IMR-90 (cell line): ENCODE measurements at regions of chr11 and their contacts with region 1.

Region 1: DNA sequence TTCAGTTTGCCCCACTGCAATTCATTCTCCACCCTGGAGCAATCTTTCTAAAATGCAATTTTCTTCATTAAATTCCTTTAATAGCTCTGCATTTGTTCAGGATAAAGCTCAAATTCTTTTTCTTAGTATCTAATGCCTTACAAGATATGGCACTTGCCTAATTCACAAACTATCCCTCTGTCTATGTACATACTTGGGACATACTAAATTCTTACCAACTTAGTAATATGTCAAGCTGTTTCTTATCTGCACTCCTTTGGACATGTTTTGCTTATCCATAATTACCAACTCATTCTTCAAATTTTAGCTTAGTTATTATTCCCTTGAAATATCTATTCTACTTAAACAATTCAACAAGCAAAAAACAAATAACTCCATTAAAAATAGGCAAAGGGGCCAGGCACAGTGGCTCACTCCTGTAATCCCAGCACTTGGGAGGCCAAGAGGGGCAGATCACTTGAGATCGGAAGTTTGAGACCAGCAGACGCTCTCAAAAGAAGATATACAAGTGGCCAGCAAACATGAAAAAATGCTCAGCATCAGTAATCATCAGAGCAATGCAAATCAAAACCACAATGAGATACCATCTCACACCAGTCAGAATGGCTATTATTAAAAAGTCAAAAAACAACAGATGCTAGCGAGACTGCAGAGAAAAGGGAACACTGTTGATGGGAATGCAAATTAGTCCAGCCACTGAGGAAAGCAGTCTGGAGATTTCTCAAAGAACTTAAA is 96.9 kb downstream of the FAM76B start:
- DNase-seq: peak; percentile 55
- ATAC-seq: peak; percentile 95
- H3K4me3 ChIP-seq: no peak overlapping the region
- H3K27ac ChIP-seq: peak overlapping the region; percentile 57; the same call in 1 of the 2 replicates
- H3K4me1 ChIP-seq: peaks cover 2% of the 10 kb centered on the region; the same call in 1 of the 2 replicates
- H3K27me3 ChIP-seq: peaks cover 1% of the 10 kb centered on the region; the same call in 1 of the 2 replicates
- CTCF ChIP-seq: no peak
- POLR2A ChIP-seq: no peak
- RAD21 ChIP-seq: no peak

Region 2: DNA sequence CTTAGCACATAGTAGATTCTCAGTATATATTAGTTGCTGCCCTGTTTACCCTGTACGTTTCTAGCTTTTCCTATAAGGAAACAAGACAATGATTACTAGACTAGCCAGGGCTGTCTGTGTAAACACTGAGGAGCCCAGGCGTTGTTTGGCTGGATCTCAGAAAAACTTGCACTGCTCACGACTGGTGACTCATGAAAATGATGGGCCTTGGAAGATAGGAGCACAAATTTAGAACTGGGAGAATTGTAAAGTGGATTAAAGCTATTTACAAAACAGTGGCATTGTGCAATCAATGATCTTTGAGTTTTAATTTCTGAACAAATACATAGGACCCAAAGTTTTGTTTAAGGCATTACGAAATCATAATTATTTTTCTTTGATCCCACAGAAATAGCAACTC is 180.0 kb before region 1 on chr11:
- CTCF ChIA-PET with region 1: interaction called, 3 read pairs
- POLR2A ChIA-PET with region 1: no interaction called
- dilution Hi-C with region 1: no loop called
- in situ Hi-C with region 1: no loop called
- intact Hi-C with region 1: loop called (anchors 5 kb)
- DNase-seq: peak; percentile 88
- ATAC-seq: peak; percentile 83
- H3K4me3 ChIP-seq: no peak overlapping the region
- H3K27ac ChIP-seq: no peak overlapping the region
- H3K4me1 ChIP-seq: peaks cover 5% of the 10 kb centered on the region
- H3K27me3 ChIP-seq: peaks cover 2% of the 10 kb centered on the region; the same call in 1 of the 2 replicates
- CTCF ChIP-seq: no peak
- POLR2A ChIP-seq: no peak
- RAD21 ChIP-seq: no peak

Region 3: GRCh38 chr11:95556342-95557163 is 136.1 kb before region 1 on chr11:
- CTCF ChIA-PET with region 1: no interaction called
- POLR2A ChIA-PET with region 1: no interaction called
- dilution Hi-C with region 1: no loop called
- in situ Hi-C with region 1: no loop called
- intact Hi-C with region 1: loop called (anchors 5 kb)
- DNase-seq: peak; percentile 49
- ATAC-seq: peak; percentile 62
- H3K4me3 ChIP-seq: no peak overlapping the region
- H3K27ac ChIP-seq: peak overlapping the region; percentile 1; the same call in 1 of the 2 replicates
- H3K4me1 ChIP-seq: peaks cover 5% of the 10 kb centered on the region
- H3K27me3 ChIP-seq: no peaks in the 10 kb centered on the region; the same call in 1 of the 2 replicates
- CTCF ChIP-seq: no peak
- POLR2A ChIP-seq: no peak
- RAD21 ChIP-seq: no peak

Region 4: DNA sequence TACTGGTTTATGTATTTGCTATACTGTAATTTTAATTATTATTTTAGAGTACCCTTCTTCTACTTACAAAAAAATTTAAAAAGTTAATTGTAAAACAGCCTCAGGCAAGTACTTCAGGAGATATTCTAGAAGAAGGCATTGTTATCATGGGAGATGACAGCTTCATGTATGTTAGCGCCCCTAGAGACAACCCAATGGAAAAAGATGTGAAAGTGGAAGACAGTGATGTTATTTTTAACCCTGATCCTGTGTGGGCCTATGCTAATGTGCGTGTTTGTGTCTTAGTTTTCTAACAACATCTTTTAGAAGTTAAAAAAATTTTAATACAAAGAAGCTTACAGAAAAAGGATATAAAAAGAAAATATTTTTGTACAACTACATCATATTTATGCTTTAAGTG is 108.1 kb before region 1 on chr11:
- CTCF ChIA-PET with region 1: no interaction called
- POLR2A ChIA-PET with region 1: no interaction called
- dilution Hi-C with region 1: no loop called
- in situ Hi-C with region 1: no loop called
- intact Hi-C with region 1: loop called (anchors 1 kb)
- DNase-seq: no peak
- ATAC-seq: no peak
- H3K4me3 ChIP-seq: no peak overlapping the region
- H3K27ac ChIP-seq: no peak overlapping the region
- H3K4me1 ChIP-seq: peaks cover 8% of the 10 kb centered on the region
- H3K27me3 ChIP-seq: no peaks in the 10 kb centered on the region
- CTCF ChIP-seq: no peak
- POLR2A ChIP-seq: no peak
- RAD21 ChIP-seq: no peak

Region 5: DNA sequence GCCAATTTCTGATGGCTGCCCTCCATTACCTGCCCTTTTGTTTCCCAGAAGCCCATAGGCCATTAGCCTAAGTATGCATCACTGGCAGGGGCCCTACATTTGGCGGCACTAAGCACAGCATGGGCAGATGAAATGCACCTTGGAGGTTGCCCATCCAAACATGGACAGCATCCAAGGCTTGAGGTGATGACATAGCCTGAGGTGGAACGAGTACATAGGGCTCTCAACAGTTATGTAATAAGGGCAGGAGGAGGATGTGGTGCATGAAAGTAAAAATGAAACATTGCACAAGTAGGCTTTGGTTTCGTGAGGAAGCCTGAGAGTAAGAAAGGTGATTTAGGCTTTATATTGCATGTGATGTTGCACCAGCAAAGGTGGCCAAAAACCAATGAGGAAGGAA is 51.2 kb before region 1 on chr11:
- CTCF ChIA-PET with region 1: no interaction called
- POLR2A ChIA-PET with region 1: no interaction called
- dilution Hi-C with region 1: no loop called
- in situ Hi-C with region 1: no loop called
- intact Hi-C with region 1: no loop called
- DNase-seq: no peak
- ATAC-seq: no peak
- H3K4me3 ChIP-seq: no peak overlapping the region
- H3K27ac ChIP-seq: no peak overlapping the region
- H3K4me1 ChIP-seq: no peaks in the 10 kb centered on the region
- H3K27me3 ChIP-seq: no peaks in the 10 kb centered on the region
- CTCF ChIP-seq: no peak
- POLR2A ChIP-seq: no peak
- RAD21 ChIP-seq: no peak

Region 6: DNA sequence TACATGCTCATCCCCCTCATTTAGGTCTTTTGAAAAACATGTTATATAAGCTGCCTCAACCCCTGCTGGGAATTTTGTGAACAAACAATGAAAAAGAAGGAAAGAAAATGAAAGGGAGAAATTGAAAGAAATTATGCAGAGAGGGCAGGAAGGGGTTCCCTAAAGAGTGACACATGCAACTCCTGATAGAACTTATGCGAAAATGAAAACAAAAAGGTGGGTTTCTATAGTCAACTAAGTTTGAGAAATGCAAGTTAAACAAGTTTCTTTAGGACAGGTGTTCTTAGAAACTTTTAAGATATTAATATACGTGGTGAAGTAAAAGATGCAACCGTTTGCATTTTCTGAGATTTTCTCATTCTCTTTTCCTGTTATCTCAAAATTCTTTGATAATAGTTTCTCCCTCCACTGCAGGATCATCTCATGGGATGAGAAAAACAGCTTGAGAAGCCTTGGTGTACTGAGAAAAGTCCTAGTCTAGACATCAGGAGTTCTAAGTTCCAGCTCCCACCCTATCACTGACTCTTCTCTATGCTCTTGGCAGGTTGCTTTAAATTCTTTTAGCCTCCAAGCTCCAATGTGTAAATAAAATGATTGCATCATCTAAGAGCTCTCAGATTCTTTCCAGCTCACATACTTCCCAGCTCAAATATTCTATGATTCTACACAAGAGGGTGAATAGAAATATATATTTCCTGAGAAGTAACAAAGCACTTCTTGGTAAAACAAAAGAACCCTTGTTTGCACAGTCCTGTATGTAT is 12.3 kb before region 1 on chr11:
- CTCF ChIA-PET with region 1: no interaction called
- POLR2A ChIA-PET with region 1: no interaction called
- dilution Hi-C with region 1: no loop called
- in situ Hi-C with region 1: no loop called
- intact Hi-C with region 1: loop called (anchors 1 kb)
- DNase-seq: peak; percentile 85
- ATAC-seq: peak; percentile 88
- H3K4me3 ChIP-seq: no peak overlapping the region
- H3K27ac ChIP-seq: peak overlapping the region; percentile 69; the same call in 1 of the 2 replicates
- H3K4me1 ChIP-seq: peaks cover 10% of the 10 kb centered on the region
- H3K27me3 ChIP-seq: no peaks in the 10 kb centered on the region
- CTCF ChIP-seq: no peak
- POLR2A ChIP-seq: no peak
- RAD21 ChIP-seq: no peak